B cell (primary cell): ENCODE measurements at regions of chr2 and their contacts with region 1.

Region 1: DNA sequence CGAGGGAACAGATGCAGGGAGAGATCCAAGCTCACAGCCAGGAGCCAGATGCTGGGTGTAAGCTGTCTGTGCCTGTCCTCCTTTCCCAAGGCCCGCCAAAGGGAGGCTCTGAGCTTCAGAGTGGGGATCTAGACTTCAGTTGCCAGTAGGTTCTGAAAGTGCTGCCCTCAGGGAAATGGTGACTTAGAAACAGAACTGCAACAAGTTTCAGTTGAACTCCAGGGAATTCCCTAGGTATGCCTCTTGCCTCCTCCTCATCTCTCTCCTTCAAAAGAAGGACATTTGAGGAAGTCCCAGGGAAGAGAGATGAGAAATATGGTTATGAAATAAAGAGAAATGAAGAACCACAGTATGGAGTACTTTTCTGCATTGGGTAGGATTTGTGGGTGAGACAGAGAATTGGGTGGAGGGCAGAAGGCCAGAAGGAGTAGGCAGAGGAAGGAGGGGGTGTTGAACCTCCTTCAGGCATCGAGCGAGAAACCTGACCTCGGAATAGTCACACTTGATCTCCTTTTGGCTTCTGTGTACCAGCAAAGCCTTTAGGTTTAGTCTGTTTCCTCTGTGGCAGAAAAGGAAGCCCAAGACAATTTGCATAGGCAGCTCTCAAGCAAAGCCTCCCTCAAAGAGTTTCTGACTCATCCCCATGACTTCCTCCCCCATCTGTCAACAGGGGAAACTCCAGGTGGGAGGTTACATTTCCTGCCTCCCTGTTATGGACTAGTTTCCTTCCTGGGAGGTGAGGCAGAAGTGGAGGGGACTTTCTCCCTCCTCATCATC is 45.7 kb downstream of the QPCT start:
- DNase-seq: peak; percentile 91
- ATAC-seq: peak; percentile 93
- H3K4me3 ChIP-seq: peak overlapping the region in 1 of 5 experiments; percentile 40
- H3K4me3 Mint-ChIP-seq: peak overlapping the region; percentile 81
- H3K27ac ChIP-seq: peak overlapping the region; percentile 91 to 93
- H3K27ac Mint-ChIP-seq: no peak overlapping the region
- H3K4me1 ChIP-seq: peaks cover 37 to 38% of the 10 kb centered on the region in 2 donors
- H3K4me1 Mint-ChIP-seq: peaks cover 3% of the 10 kb centered on the region
- H3K27me3 ChIP-seq: no peaks in the 10 kb centered on the region
- H3K27me3 Mint-ChIP-seq: no peaks in the 10 kb centered on the region
- CTCF ChIP-seq: no peak

Region 2: GRCh38 chr2:37083873-37084794 is 306.0 kb before region 1 on chr2 and contains the starts of genes GPATCH11 and HEATR5B:
- CTCF ChIA-PET with region 1: no interaction called
- POLR2A ChIA-PET with region 1: no interaction called
- intact Hi-C with region 1: loop called (anchors 5 kb)
- DNase-seq: peak; percentile 94
- ATAC-seq: peak; percentile 81
- H3K4me3 ChIP-seq: peak within 1 kb of the TSS; percentile 75 to 93 (median 89)
- H3K4me3 Mint-ChIP-seq: peak within 1 kb of the TSS; percentile 76
- H3K27ac ChIP-seq: peak within 1 kb of the TSS; percentile 69 to 91
- H3K27ac Mint-ChIP-seq: peak within 1 kb of the TSS; percentile 84
- H3K4me1 ChIP-seq: peaks cover 67 to 73% of the 10 kb centered on the region in 2 donors
- H3K4me1 Mint-ChIP-seq: peaks cover 61% of the 10 kb centered on the region
- H3K27me3 ChIP-seq: no peaks in the 10 kb centered on the region
- H3K27me3 Mint-ChIP-seq: no peaks in the 10 kb centered on the region
- CTCF ChIP-seq: no peak
- total RNA-seq, gene GPATCH11: 18.2 and 20.2 TPM in 2 replicates
- total RNA-seq, gene HEATR5B: 44.3 and 50.0 TPM in 2 replicates

Region 3: GRCh38 chr2:37324786-37325624 is 65.2 kb before region 1 on chr2 and contains the start of gene PRKD3:
- CTCF ChIA-PET with region 1: interaction called, 10 read pairs
- POLR2A ChIA-PET with region 1: interaction called, 5 read pairs
- intact Hi-C with region 1: loop called (anchors 1 kb)
- DNase-seq: peak; percentile 89
- ATAC-seq: peak; percentile 81
- H3K4me3 ChIP-seq: peak within 1 kb of the TSS; percentile 82 to 91 (median 86)
- H3K4me3 Mint-ChIP-seq: peak within 1 kb of the TSS; percentile 100
- H3K27ac ChIP-seq: peak within 1 kb of the TSS; percentile 80 to 88
- H3K27ac Mint-ChIP-seq: peak within 1 kb of the TSS; percentile 97
- H3K4me1 ChIP-seq: peaks cover 29 to 37% of the 10 kb centered on the region in 2 donors
- H3K4me1 Mint-ChIP-seq: peaks cover 38% of the 10 kb centered on the region
- H3K27me3 ChIP-seq: no peaks in the 10 kb centered on the region
- H3K27me3 Mint-ChIP-seq: peaks cover 3% of the 10 kb centered on the region
- CTCF ChIP-seq: no peak
- total RNA-seq, gene PRKD3: 82.2 and 83.4 TPM in 2 replicates

Region 4: DNA sequence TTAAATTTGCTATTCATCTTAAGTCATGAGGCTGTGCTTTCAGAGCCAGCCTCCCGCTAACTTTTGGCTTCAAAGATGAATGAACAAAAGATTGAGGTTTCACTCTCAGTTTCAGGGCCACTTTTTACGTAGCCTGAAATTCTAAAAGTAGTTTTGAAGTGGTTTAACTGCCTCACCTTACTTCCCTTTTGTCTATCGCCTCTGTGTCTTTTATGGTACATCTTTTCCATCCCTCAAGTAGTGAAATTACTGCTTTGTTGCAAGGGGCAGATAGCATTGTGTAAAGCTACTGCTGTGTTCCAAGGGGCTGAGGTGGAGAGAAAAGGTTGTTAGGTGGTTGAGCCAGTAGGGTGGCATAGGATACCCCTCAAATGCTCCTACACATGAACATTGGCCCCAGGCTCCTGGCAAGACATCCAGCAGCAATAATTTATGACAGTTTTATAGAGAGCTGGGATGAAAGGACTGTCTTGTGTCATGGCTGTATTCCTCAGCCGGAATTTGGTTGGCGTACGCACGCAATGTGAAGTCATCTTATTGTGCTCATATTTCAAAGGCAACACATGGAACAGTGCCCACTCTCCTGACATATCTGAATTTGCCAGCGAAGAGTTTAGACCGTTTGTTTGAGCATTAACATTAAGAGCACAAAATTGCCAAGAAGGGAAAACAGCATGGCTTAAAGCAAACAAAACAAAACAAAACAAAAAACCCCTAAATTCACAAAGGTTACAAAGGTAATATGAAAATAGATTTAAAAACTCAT is 13.6 kb before region 1 on chr2:
- CTCF ChIA-PET with region 1: interaction called, 24 read pairs
- POLR2A ChIA-PET with region 1: interaction called, 16 read pairs
- intact Hi-C with region 1: loop called (anchors 1 kb)
- DNase-seq: peak; percentile 81
- ATAC-seq: peak; percentile 74
- H3K4me3 ChIP-seq: peak overlapping the region in 4 of 5 experiments; percentile 5 to 36 (median 30)
- H3K4me3 Mint-ChIP-seq: peak overlapping the region; percentile 83
- H3K27ac ChIP-seq: peak overlapping the region; percentile 72 to 74
- H3K27ac Mint-ChIP-seq: peak overlapping the region; percentile 90
- H3K4me1 ChIP-seq: peaks cover 42 to 45% of the 10 kb centered on the region in 2 donors
- H3K4me1 Mint-ChIP-seq: peaks cover 43% of the 10 kb centered on the region
- H3K27me3 ChIP-seq: no peaks in the 10 kb centered on the region
- H3K27me3 Mint-ChIP-seq: no peaks in the 10 kb centered on the region
- CTCF ChIP-seq: no peak

Region 5: GRCh38 chr2:37414470-37414949 is 24.3 kb after region 1 on chr2:
- CTCF ChIA-PET with region 1: interaction called, 114 read pairs
- POLR2A ChIA-PET with region 1: no interaction called
- intact Hi-C with region 1: no loop called
- DNase-seq: peak; percentile 68
- ATAC-seq: peak; percentile 76
- H3K4me3 ChIP-seq: no peak overlapping the region
- H3K4me3 Mint-ChIP-seq: no peak overlapping the region
- H3K27ac ChIP-seq: no peak overlapping the region
- H3K27ac Mint-ChIP-seq: no peak overlapping the region
- H3K4me1 ChIP-seq: no peaks in the 10 kb centered on the region
- H3K4me1 Mint-ChIP-seq: peaks cover 6% of the 10 kb centered on the region
- H3K27me3 ChIP-seq: no peaks in the 10 kb centered on the region
- H3K27me3 Mint-ChIP-seq: no peaks in the 10 kb centered on the region
- CTCF ChIP-seq: peak; percentile 87

Region 6: GRCh38 chr2:37877457-37878315 is 487.5 kb after region 1 on chr2:
- CTCF ChIA-PET with region 1: interaction called, 147 read pairs
- POLR2A ChIA-PET with region 1: no interaction called
- intact Hi-C with region 1: no loop called
- DNase-seq: peak; percentile 76
- ATAC-seq: peak; percentile 43
- H3K4me3 ChIP-seq: no peak overlapping the region
- H3K4me3 Mint-ChIP-seq: no peak overlapping the region
- H3K27ac ChIP-seq: no peak overlapping the region
- H3K27ac Mint-ChIP-seq: no peak overlapping the region
- H3K4me1 ChIP-seq: no peaks in the 10 kb centered on the region
- H3K4me1 Mint-ChIP-seq: no peaks in the 10 kb centered on the region
- H3K27me3 ChIP-seq: peaks cover 0 to 6% (median 2%) of the 10 kb centered on the region in 4 experiments
- H3K27me3 Mint-ChIP-seq: peaks cover 31% of the 10 kb centered on the region
- CTCF ChIP-seq: peak; percentile 97